Calu3 (cell line): ENCODE measurements at regions of chr16 and their contacts with region 1.

Region 1: GRCh38 chr16:4373863-4374742 is 2.5 kb downstream of the VASN start:
- DNase-seq: peak; percentile 82
- H3K4me3 Mint-ChIP-seq: peak overlapping the region; percentile 75
- H3K27ac Mint-ChIP-seq: peak overlapping the region; percentile 95
- H3K4me1 Mint-ChIP-seq: peaks cover 59% of the 10 kb centered on the region
- H3K27me3 Mint-ChIP-seq: no peaks in the 10 kb centered on the region
- CTCF ChIP-seq: no peak

Region 2: DNA sequence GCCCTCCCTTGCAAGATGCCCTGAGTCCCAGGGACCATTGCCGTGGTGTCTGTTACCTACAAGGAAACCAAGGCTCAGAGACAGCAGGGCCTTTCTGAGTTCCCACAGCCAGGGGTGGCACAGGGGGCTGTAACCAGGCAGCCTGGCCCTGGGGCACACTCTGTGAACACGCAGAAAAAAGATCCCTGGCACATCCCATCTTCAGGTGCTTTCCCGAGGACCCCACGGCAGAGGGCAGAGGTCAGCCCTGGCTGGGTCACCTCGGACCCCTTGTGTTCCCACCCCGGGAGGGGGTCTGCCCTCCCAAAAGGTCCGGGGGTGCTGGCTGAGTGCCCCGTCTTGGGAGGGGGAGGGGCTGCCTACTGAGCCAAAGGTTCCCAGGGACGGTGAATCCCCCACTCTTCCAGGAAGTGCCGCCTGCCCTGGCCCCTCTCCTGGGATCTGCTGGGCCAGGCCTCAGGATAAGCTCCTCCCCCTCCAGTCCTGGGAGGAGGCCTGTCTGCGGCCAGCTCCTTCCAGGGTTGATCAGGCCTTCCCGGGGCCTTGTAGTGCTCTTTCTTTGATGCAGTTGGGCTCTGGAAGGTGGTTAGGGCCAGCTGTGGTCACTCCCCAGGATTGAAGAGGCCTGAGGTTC is 50.1 kb before region 1 on chr16:
- CTCF ChIA-PET with region 1: no interaction called
- intact Hi-C with region 1: no loop called
- DNase-seq: peak; percentile 66
- H3K4me3 Mint-ChIP-seq: peak overlapping the region; percentile 17
- H3K27ac Mint-ChIP-seq: no peak overlapping the region
- H3K4me1 Mint-ChIP-seq: peaks cover 8% of the 10 kb centered on the region
- H3K27me3 Mint-ChIP-seq: no peaks in the 10 kb centered on the region
- CTCF ChIP-seq: no peak

Region 3: DNA sequence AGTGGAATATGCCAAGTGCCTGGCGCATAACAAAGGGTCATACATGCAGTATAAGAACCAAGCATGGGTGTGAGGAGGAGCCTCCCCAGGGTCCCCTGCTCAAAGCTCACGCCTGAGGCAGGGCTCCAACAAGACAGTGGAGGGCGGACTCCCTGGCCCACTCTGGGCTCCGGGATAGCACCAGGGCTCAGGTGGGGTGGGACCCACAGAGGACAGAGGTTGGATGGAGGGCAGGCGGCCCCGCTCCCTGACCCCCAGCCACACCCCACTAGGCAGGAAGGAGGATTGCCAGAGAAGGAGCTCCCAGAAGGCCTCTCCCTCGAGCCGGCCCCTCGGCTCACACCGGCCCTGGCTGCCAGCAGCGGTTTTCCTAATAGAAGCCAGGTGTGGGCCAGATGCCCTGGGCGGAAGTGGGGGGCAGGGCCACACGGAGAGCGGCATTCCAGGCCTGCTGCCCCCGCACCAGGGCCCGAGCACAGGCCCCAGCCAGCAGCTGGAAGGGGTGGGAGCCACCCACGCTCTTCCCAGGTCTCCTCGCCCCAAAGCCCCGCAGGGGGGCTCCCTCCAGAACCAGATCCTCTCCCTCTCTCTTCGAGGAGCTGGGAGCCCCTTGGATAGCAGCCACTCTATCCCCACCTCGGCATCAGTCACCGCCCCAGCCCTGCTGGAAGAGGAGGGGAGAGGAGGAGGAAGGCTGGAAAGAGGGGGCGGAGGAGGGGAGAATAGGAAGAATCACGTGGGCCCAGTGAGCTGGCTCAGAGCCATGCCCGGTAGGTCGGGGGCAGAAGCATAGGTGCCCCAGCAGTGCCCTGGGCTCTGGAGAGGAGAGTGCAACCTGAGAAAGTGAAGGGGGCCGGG is 18.5 kb after region 1 on chr16:
- CTCF ChIA-PET with region 1: interaction called, 12 read pairs
- intact Hi-C with region 1: no loop called
- DNase-seq: peak; percentile 57
- H3K4me3 Mint-ChIP-seq: peak overlapping the region; percentile 41
- H3K27ac Mint-ChIP-seq: peak overlapping the region; percentile 79
- H3K4me1 Mint-ChIP-seq: peaks cover 14% of the 10 kb centered on the region
- H3K27me3 Mint-ChIP-seq: no peaks in the 10 kb centered on the region
- CTCF ChIP-seq: no peak

Region 4: GRCh38 chr16:4475880-4476788 is 102.0 kb after region 1 on chr16 and contains the start of gene HMOX2:
- CTCF ChIA-PET with region 1: no interaction called
- intact Hi-C with region 1: no loop called
- DNase-seq: peak; percentile 99
- H3K4me3 Mint-ChIP-seq: peak within 1 kb of the TSS; percentile 82
- H3K27ac Mint-ChIP-seq: peak within 1 kb of the TSS; percentile 79
- H3K4me1 Mint-ChIP-seq: peaks cover 9% of the 10 kb centered on the region
- H3K27me3 Mint-ChIP-seq: no peaks in the 10 kb centered on the region
- CTCF ChIP-seq: peak; percentile 34
- total RNA-seq, gene HMOX2: 79.2 and 103 TPM in 2 replicates